ENCODE measurements at regions of chr6 and their contacts with region 1.

Region 1: DNA sequence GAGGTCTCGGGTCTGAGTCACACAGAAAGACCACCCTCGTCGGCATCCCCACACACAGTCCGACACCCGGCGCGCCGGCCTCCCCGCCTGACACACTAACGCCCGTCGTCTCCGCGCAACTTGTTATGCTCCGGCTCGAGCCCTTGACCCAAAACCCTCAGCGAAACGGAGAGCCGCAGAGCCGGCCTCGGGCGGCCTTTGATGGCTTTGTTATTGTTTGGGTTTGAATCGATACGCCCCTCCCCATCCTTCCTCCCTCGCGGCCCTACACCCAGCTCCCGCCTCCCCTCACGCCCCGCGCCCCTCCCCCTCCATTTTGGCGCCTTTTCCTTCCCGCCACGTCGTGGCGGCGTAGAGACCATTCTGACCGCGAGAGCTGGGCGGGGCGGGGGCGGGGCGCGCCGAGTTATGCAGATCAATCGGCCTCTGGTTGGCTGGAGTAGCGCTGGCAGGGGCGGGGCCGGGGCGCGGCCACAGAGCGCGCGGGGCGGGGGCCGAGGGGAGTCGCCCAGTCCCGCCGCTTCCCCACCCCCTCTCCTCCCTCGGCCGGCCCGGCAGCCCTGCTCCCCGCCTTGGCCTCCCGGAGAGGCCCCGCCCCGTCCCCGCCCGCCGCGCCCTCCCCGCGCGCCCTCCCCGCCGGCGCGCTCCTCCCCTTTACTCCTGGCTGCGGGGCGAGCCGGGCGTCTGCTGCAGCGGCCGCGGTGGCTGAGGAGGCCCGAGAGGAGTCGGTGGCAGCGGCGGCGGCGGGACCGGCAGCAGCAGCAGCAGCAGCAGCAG is at the start of gene PIM1:
- DNase-seq: peak; percentile 95
- ATAC-seq: peak; percentile 91
- H3K4me3 ChIP-seq: peak within 1 kb of the TSS; percentile 84
- H3K27ac ChIP-seq: peak within 1 kb of the TSS; percentile 85
- H3K4me1 ChIP-seq: peaks cover 7% of the 10 kb centered on the region
- H3K27me3 ChIP-seq: no peaks in the 10 kb centered on the region
- CTCF ChIP-seq: no peak
- POLR2A ChIP-seq: peak; percentile 79
- RAD21 ChIP-seq: no peak; the same call in 1 of the 2 replicates
- total RNA-seq, gene PIM1: 6.1 and 7.2 TPM in 2 replicates

Region 2: DNA sequence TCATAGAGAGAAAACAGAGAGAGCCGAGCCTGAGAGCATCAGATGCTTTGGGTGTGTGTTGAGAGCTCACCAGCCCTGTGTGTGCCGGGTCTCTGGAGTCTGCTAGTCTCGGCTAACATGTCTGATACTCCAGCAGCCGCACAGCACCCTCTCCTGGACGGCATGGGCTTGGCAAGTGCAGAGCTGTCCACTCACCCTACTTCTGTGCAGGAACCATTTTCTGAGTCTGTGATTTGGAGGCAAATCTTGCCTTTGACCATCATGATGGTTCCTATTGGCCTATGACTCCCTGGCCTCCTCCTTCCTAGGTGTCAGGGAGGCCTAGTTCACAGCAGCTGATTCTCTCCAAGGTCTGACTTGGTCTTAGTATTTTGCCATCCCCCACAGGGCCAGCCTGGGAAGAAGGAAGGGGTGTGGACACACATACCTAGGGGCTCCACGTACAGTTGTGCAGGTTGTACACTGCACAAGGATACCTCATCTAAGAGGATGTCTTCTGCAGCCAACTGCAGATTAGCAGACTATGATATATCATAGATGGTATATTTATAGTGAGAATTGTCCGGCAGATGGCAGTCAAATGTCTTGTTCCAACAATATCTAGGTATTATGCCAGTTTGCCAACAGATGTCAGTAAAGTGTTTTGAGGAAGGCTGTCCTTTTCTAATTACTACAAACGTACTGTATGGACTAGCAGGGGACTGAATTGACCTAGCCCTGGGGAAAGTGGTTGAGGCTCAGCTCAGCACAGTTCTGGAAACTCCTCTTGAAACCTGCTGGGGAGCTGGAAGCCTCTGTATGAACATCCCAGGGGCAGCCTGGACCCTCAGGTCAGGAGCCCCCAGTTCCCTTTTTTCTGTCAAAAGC is 151.3 kb before region 1 on chr6:
- CTCF ChIA-PET with region 1: interaction called, 5 read pairs
- POLR2A ChIA-PET with region 1: no interaction called
- dilution Hi-C with region 1: no loop called
- in situ Hi-C with region 1: no loop called
- intact Hi-C with region 1: loop called (anchors 1 kb)
- DNase-seq: peak; percentile 87
- ATAC-seq: peak; percentile 99
- H3K4me3 ChIP-seq: no peak overlapping the region
- H3K27ac ChIP-seq: no peak overlapping the region
- H3K4me1 ChIP-seq: no peaks in the 10 kb centered on the region; the same call in 1 of the 2 replicates
- H3K27me3 ChIP-seq: no peaks in the 10 kb centered on the region
- CTCF ChIP-seq: peak; percentile 97
- POLR2A ChIP-seq: no peak
- RAD21 ChIP-seq: peak; percentile 96

Region 3: DNA sequence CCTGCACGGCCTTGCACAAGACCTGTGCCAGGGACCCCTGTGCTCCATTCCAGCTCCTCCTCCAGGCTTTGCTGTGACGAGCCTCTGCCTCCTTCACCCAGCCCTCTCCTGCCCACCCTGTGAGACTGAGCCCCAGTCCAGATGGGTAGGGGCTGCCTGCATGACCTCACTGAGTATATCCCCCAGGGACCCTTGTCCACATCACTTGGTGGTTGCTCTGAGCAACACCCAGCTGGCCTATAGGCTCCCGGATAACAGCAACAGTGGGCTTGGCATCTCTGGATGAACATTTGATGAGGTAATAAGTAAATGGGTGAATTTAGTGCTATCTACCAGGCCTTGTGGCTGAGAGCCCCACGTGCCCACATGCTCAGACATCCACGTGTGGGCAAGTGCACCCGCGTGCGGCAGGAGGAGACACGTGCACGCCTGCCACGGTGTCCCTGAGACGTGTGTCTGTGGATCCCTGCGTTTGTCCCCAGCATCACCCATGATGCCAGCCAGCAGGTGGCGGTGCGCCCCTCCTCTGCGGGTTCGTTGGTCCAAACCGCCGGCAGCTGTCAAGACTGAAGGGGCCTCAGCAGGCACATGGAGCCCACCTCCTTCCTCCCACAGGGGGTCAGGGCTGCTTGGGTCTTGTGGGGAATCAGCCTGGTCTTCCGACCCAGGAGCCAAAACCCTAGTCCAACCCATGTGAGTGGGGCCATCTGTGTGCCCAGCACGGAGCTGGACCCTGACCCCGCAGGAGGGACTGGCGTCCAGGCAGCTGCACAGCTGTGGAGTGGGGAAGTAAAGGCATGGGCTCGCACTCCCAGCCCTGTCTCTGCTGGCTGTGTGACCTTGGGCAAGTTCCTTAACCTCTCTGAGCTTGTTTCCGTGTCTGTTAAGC is 118.3 kb before region 1 on chr6:
- CTCF ChIA-PET with region 1: interaction called, 20 read pairs
- POLR2A ChIA-PET with region 1: no interaction called
- dilution Hi-C with region 1: no loop called
- in situ Hi-C with region 1: loop called (anchors 5 kb)
- intact Hi-C with region 1: loop called (anchors 1 kb)
- DNase-seq: peak; percentile 61
- ATAC-seq: peak; percentile 85
- H3K4me3 ChIP-seq: no peak overlapping the region
- H3K27ac ChIP-seq: no peak overlapping the region
- H3K4me1 ChIP-seq: peaks cover 6% of the 10 kb centered on the region
- H3K27me3 ChIP-seq: no peaks in the 10 kb centered on the region
- CTCF ChIP-seq: peak; percentile 95
- POLR2A ChIP-seq: peak; percentile 58
- RAD21 ChIP-seq: peak; percentile 95

Region 4: DNA sequence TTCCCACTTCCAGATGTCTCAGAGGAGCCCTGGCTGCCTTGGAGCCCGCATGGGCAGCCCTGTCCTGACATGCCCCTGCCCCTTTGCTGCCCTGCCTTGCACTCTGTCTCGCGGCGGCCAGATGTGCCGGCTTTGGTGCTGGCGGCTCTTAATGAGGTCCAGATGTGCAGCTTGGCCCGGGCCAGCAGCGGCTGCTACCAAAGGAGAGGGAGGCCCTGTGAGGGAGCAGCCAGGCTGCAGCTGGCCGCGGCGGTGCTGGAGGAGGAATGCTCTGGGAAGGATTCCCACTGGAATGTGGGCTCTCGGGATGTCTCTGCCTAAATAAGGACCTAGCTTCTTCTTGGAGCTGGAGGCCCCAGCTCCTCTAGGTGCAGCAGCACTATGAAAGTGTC is 91.8 kb before region 1 on chr6:
- CTCF ChIA-PET with region 1: interaction called, 10 read pairs
- POLR2A ChIA-PET with region 1: interaction called, 4 read pairs
- dilution Hi-C with region 1: no loop called
- in situ Hi-C with region 1: no loop called
- intact Hi-C with region 1: no loop called
- DNase-seq: peak; percentile 95
- ATAC-seq: peak; percentile 98
- H3K4me3 ChIP-seq: no peak overlapping the region
- H3K27ac ChIP-seq: peak overlapping the region; percentile 88
- H3K4me1 ChIP-seq: peaks cover 9% of the 10 kb centered on the region
- H3K27me3 ChIP-seq: no peaks in the 10 kb centered on the region
- CTCF ChIP-seq: no peak
- POLR2A ChIP-seq: no peak
- RAD21 ChIP-seq: peak; percentile 27

Region 5: GRCh38 chr6:37127961-37128862 is 41.5 kb before region 1 on chr6:
- CTCF ChIA-PET with region 1: interaction called, 7 read pairs
- POLR2A ChIA-PET with region 1: interaction called, 11 read pairs
- dilution Hi-C with region 1: no loop called
- in situ Hi-C with region 1: no loop called
- intact Hi-C with region 1: no loop called
- DNase-seq: peak; percentile 74
- ATAC-seq: peak; percentile 71
- H3K4me3 ChIP-seq: no peak overlapping the region
- H3K27ac ChIP-seq: no peak overlapping the region
- H3K4me1 ChIP-seq: peaks cover 17% of the 10 kb centered on the region
- H3K27me3 ChIP-seq: no peaks in the 10 kb centered on the region
- CTCF ChIP-seq: peak; percentile 13; the same call in 1 of the 2 replicates
- POLR2A ChIP-seq: no peak
- RAD21 ChIP-seq: peak; percentile 27; the same call in 1 of the 2 replicates

Region 6: DNA sequence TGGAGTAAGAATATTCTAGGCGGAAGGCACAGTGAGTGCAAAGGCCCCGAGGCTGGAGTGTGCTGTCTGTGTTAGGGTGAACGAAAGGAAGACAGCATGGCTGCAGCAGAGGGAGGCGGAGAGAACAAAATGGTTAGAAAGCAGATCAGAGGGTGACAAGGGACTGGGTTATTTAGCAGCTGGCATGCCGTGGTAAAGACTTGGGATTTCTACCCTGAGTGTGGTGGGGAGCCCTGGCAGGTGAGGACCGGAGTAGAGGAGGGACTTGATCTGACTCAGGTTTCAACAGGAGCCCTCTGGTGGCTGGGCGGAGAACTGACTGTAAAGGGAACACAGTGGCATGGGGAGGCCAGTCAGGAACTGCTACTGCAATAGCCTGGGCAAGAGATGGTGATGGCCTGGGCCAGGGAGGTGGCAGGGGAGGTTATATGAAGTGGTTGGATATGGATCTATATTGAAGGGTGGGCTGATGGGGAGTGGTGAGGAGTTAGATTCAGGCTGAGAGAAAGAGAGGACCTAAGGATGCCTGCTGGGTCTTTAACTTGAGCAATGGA is 38.3 kb after region 1 on chr6:
- CTCF ChIA-PET with region 1: interaction called, 6 read pairs
- POLR2A ChIA-PET with region 1: interaction called, 8 read pairs
- dilution Hi-C with region 1: no loop called
- in situ Hi-C with region 1: no loop called
- intact Hi-C with region 1: loop called (anchors 1 kb)
- DNase-seq: peak; percentile 70
- ATAC-seq: peak; percentile 86
- H3K4me3 ChIP-seq: no peak overlapping the region
- H3K27ac ChIP-seq: no peak overlapping the region
- H3K4me1 ChIP-seq: peaks cover 2% of the 10 kb centered on the region; the same call in 1 of the 2 replicates
- H3K27me3 ChIP-seq: no peaks in the 10 kb centered on the region
- CTCF ChIP-seq: peak; percentile 69
- POLR2A ChIP-seq: no peak
- RAD21 ChIP-seq: peak; percentile 67

Measured in IMR-90 (cell line).